ENCODE measurements at regions of chr12 and their contacts with region 1.

Region 1: DNA sequence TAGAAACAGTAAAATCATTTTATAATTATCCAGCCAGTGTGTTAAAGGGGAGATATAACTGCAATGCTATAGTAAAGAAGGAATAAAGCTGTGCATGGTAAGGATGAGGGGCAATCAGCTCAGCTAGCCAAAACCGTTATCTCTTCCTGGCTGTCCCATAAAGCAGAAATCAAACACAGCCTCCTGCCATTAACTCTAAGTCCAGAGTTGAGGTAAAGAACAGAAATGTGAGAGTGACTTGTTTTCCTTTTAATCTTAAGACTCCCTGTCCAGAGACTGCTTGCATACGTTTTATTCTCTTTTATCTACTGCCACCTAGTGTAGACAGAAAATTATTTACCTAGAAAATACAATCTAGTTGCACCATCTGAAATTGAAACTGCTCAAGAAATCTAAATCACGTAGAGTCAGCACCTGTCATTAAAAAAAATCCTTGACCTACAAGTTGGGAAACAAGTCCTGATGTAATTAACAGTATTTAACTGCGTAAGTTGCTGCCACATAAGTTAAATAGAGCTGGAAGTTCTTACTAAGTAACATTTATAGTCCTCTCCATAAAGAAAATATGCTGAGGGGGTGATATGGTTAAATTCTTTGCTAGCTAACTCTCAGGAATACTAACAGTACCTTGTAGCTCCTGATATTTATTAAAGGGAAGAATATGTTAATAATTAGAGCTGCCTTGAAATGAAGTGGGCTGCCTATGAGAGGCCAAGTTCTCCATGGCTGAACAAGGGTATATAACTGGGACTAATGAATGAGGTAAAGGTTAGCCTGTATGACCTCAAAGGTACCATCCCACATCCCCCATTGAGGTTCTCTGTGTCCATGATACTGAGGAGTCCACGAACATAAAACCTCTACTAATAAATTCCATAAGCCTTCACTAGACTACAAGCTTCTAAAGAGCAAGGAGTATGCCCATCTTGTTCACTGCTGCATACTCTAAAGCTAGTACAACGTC is 62.7 kb downstream of the GALNT4 start:
- DNase-seq: peak; percentile 67
- H3K4me3 ChIP-seq: no peak overlapping the region
- H3K27ac ChIP-seq: no peak overlapping the region
- H3K4me1 ChIP-seq: no peaks in the 10 kb centered on the region
- CTCF ChIP-seq: peak; percentile 88

Region 2: DNA sequence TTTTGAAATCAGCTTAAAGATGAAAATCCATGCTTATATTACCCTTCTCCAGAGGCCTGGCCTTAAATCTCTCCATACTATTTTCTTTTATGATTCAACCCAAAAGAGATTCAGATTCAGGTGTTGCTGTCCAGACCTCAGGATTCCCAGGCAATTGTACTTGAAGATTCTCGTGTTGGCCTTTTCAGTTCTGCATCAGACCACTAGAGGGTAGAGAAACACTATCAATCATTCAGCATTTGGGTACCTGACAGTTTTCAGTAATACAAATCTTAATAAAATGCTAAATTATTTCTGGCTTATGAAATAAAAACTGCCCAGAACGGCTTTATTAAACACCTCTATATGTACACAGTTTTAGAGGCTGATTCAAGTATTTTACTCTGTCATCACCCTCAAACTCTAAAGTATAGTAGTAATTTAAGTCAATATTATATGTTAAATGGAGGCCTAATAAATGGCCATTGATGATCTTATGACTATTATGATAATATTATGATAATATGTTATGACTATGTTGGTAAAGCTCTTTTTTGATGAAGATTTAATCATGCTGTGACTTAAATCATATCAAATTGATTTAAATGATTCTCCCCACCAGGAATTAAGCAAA is 410.8 kb before region 1 on chr12:
- CTCF ChIA-PET with region 1: no interaction called
- POLR2A ChIA-PET with region 1: interaction called, 3 read pairs
- intact Hi-C with region 1: loop called (anchors 1 kb)
- DNase-seq: peak; percentile 47
- H3K4me3 ChIP-seq: no peak overlapping the region
- H3K27ac ChIP-seq: no peak overlapping the region
- H3K4me1 ChIP-seq: no peaks in the 10 kb centered on the region
- CTCF ChIP-seq: peak; percentile 86

Region 3: GRCh38 chr12:89501793-89502192 is 39.9 kb after region 1 on chr12:
- CTCF ChIA-PET with region 1: no interaction called
- POLR2A ChIA-PET with region 1: no interaction called
- intact Hi-C with region 1: no loop called
- DNase-seq: no peak
- H3K4me3 ChIP-seq: no peak overlapping the region
- H3K27ac ChIP-seq: no peak overlapping the region
- H3K4me1 ChIP-seq: no peaks in the 10 kb centered on the region
- CTCF ChIP-seq: no peak

Region 4: GRCh38 chr12:89529738-89530137 is 67.8 kb after region 1 on chr12:
- CTCF ChIA-PET with region 1: no interaction called
- POLR2A ChIA-PET with region 1: interaction called, 3 read pairs
- intact Hi-C with region 1: loop called (anchors 2 kb)
- DNase-seq: peak; percentile 58
- H3K4me3 ChIP-seq: no peak overlapping the region
- H3K27ac ChIP-seq: no peak overlapping the region
- H3K4me1 ChIP-seq: peaks cover 19% of the 10 kb centered on the region
- CTCF ChIP-seq: peak; percentile 92

Region 5: DNA sequence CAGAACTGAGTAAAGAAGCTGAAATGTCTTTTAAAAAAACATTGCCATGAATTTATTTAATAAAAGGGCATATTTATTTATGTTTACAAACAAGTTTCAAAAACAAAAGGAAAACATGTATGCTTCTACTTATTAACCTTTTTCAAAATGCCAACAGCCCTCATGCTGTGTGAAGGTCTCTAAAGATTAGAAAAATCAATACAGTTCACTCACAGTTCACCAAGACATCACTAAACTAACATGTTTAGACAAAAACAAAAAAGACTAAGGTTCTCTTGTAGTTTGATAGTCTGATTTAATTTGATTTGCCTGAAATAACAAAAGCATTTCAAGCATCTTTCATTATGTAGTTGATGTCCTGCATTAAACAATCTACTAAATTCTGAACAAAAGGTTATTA is 127.8 kb after region 1 on chr12:
- CTCF ChIA-PET with region 1: no interaction called
- POLR2A ChIA-PET with region 1: no interaction called
- intact Hi-C with region 1: no loop called
- DNase-seq: no peak
- H3K4me3 ChIP-seq: no peak overlapping the region
- H3K27ac ChIP-seq: no peak overlapping the region
- H3K4me1 ChIP-seq: no peaks in the 10 kb centered on the region
- CTCF ChIP-seq: no peak